Endothelial cell of umbilical vein (primary cell): ENCODE measurements at regions of chr9 and their contacts with region 1.

Region 1: GRCh38 chr9:106467113-106467864 is 395.7 kb upstream of the ZNF462 start:
- DNase-seq: no peak
- H3K4me3 ChIP-seq: no peak overlapping the region
- H3K27ac ChIP-seq: no peak overlapping the region
- H3K4me1 ChIP-seq: no peaks in the 10 kb centered on the region
- H3K27me3 ChIP-seq: no peaks in the 10 kb centered on the region
- CTCF ChIP-seq: no peak
- POLR2A ChIP-seq: no peak

Region 2: DNA sequence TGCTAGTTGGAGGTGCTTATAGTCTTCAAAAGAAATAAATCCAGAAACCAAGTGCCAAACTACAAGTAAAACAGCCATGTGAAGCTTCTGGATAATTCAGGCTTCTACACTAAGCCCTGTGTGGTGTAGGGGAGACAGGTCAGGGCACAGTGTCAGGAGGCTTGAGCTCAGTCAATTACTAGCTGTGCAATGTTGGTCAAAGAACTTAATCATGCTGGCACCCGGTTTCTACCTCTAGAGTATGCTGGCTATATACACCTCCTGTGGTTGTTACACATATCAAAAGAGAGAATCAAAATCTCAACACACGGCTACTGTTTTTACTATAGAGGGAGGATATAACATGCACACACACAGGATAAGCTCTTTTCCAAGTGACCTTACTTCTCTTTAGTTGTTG is 74.1 kb before region 1 on chr9:
- CTCF ChIA-PET with region 1: no interaction called
- POLR2A ChIA-PET with region 1: no interaction called
- dilution Hi-C with region 1: no loop called
- intact Hi-C with region 1: no loop called
- DNase-seq: no peak
- H3K4me3 ChIP-seq: no peak overlapping the region
- H3K27ac ChIP-seq: no peak overlapping the region
- H3K4me1 ChIP-seq: no peaks in the 10 kb centered on the region
- H3K27me3 ChIP-seq: no peaks in the 10 kb centered on the region
- CTCF ChIP-seq: no peak
- POLR2A ChIP-seq: no peak

Region 3: GRCh38 chr9:106487266-106487665 is 20.0 kb after region 1 on chr9:
- CTCF ChIA-PET with region 1: no interaction called
- POLR2A ChIA-PET with region 1: no interaction called
- dilution Hi-C with region 1: no loop called
- intact Hi-C with region 1: loop called (anchors 2 kb)
- DNase-seq: no peak
- H3K4me3 ChIP-seq: no peak overlapping the region
- H3K27ac ChIP-seq: no peak overlapping the region
- H3K4me1 ChIP-seq: no peaks in the 10 kb centered on the region
- H3K27me3 ChIP-seq: no peaks in the 10 kb centered on the region
- CTCF ChIP-seq: no peak
- POLR2A ChIP-seq: no peak